Lower leg skin (tissue), 4 donors: ENCODE measurements at regions of chr20 and their contacts with region 1.

Region 1: GRCh38 chr20:25539742-25540672 is 45.3 kb downstream of the NINL start:
- DNase-seq: peak in 1 of 2 donors; percentile 70
- H3K4me3 ChIP-seq: no peak overlapping the region
- CTCF ChIP-seq: no peak
- POLR2A ChIP-seq: no peak

Region 2: DNA sequence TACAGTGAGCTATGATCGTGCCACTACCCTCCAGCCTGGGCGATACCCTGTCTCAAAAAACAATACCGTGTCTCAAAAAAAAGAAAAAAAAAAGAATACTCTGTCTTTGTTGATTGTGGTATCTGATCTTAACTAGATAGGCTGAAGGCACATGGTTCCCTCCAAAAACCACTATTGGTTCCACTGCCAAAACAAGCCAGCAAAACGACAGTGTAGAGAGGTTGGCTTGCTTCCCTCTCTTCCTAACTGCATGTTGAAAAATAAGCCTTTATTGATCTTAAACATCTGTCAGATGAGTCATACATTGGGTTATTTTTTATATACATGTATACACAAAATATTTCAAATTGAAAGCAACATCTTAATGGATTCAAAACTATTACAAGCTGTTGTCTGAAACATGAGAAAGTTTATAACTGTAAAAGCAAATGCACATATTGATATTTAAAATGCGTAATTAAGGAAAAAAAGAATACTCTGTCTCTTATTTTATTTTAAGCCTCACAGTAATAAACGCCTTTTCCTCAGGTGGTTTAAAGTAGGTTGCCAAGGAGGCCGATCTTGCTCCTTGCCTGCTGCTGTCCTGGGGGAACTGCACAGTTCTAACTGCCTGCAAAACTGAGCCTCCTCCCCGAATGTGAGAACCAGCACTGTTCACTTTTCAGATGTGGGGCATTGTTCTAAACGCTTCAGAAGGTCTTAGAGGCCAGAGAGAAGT is 52.3 kb after region 1 on chr20:
- intact Hi-C with region 1: loop called (anchors 10 kb)
- DNase-seq: peak in 1 of 2 donors; percentile 2
- H3K4me3 ChIP-seq: no peak overlapping the region
- CTCF ChIP-seq: no peak
- POLR2A ChIP-seq: no peak

Region 3: DNA sequence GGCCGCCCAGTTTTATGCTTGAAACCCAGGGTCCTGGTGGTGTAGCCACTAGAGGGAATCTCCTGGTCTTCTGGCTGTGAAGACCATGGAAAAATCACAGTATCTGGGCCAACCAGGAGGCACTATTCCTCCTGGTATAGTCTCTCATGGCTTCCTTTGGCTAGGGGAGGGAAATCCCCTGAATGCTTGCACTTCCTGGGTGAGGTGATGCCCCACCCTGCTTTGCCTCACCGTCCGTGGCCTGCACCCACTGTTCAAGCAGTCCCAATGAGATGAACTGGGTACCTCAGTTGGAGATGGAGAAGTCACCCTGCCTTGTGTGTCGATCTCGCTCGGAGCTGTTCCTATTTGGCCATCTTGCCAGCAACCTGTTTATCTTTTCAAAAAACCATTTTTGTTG is 166.8 kb after region 1 on chr20:
- intact Hi-C with region 1: no loop called
- DNase-seq: no peak
- H3K4me3 ChIP-seq: no peak overlapping the region
- CTCF ChIP-seq: no peak
- POLR2A ChIP-seq: no peak